MCF 10A (cell line): ENCODE measurements at regions of chr1 and their contacts with region 1.

Region 1: GRCh38 chr1:167663002-167663772 is 33.2 kb downstream of the RCSD1 start:
- DNase-seq: peak; percentile 99
- H3K4me3 Mint-ChIP-seq: peak overlapping the region; percentile 51
- H3K27ac Mint-ChIP-seq: peak overlapping the region; percentile 71
- H3K4me1 Mint-ChIP-seq: peaks cover 71% of the 10 kb centered on the region
- H3K27me3 Mint-ChIP-seq: no peaks in the 10 kb centered on the region
- CTCF ChIP-seq: no peak

Region 2: DNA sequence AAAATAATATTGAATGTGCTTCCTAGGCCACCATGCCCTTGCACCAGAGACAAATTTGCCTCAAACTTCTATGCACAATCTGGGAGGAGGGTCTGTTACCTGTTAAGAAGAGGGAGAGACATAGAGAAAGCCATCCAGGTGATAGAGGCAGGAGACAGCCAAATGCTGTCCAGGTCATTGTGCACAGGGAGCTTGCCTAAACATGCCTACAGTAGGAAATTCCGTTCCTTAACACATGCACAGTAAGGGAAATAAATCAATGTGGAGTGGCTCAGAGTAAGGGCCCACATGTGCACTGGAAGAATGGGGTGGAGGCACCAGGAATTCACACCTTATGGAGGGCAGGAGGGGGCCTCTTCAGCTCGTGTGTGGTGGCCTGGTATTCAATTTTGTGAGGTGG is 90.2 kb before region 1 on chr1:
- CTCF ChIA-PET with region 1: no interaction called
- POLR2A ChIA-PET with region 1: interaction called, 20 read pairs
- intact Hi-C with region 1: no loop called
- DNase-seq: peak; percentile 57
- H3K4me3 Mint-ChIP-seq: no peak overlapping the region
- H3K27ac Mint-ChIP-seq: peak overlapping the region; percentile 76
- H3K4me1 Mint-ChIP-seq: peaks cover 18% of the 10 kb centered on the region
- H3K27me3 Mint-ChIP-seq: no peaks in the 10 kb centered on the region
- CTCF ChIP-seq: no peak

Region 3: DNA sequence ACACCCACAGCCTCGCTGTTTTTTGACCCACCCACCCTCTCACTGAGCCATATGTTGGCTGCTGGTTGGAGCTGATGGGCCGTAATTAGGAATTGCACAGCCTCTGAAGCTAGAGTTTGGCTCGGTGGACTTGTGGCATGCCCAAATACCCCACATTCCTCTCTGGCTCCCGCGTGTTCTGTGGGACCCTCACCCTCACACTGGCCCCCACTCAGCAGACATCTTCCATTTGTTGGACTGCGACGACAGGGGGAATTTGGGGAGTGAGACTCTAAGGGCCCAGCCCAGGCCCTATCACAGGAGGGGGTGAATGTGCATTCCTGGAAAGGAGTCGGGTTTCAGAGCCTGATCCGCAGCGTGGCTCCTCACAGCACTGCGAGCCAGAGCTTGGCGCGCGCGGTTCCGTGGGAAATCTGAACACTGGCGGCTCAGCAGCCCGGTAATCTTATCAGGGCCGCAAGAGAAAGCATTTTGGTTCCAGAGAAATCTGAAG is 28.0 kb before region 1 on chr1:
- CTCF ChIA-PET with region 1: interaction called, 6 read pairs
- POLR2A ChIA-PET with region 1: interaction called, 13 read pairs
- intact Hi-C with region 1: no loop called
- DNase-seq: no peak
- H3K4me3 Mint-ChIP-seq: no peak overlapping the region
- H3K27ac Mint-ChIP-seq: no peak overlapping the region
- H3K4me1 Mint-ChIP-seq: peaks cover 25% of the 10 kb centered on the region
- H3K27me3 Mint-ChIP-seq: no peaks in the 10 kb centered on the region
- CTCF ChIP-seq: no peak

Region 4: DNA sequence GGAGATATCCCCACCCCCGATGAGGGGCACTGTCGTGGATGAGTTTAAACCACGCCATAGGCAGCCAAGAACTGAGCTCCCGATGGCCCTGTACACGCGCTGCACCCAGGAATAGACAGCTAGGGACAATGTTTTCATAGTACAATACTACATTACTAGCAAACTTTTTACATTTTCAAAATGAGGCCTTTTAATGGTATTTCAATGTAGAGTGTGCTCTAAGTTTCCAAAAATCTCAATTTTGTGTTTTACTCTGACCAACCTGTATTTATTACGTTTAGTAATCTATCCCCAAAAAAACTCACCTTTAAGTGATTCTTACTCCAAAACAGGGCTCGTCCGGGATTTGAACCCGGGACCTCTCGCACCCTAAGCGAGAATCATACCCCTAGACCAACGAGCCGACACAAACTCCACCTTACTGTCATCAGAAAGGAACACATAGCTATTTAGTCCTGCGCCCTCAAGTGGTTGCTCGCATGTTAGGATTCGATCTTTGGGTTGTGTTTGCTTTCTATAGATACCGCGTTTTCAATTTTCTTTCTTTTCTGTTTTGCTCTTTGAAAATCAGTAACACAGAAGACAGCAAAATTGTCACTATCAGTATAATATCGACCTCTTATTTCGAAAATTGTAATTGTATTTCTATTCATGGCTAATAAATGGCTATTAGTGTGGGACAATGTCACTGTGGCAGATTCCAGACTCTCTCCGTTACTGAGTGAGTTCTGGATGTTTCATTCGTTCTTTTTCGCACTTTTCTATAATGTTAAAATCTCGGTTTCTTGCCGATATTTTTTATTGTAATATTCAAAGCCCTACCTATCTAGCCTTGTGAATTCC is 52.2 kb after region 1 on chr1:
- CTCF ChIA-PET with region 1: interaction called, 3 read pairs
- POLR2A ChIA-PET with region 1: interaction called, 21 read pairs
- intact Hi-C with region 1: no loop called
- DNase-seq: peak; percentile 97
- H3K4me3 Mint-ChIP-seq: peak overlapping the region; percentile 88
- H3K27ac Mint-ChIP-seq: peak overlapping the region; percentile 91
- H3K4me1 Mint-ChIP-seq: peaks cover 16% of the 10 kb centered on the region
- H3K27me3 Mint-ChIP-seq: no peaks in the 10 kb centered on the region
- CTCF ChIP-seq: peak; percentile 98